ENCODE measurements at regions of chr17 and their contacts with region 1.

Region 1: GRCh38 chr17:78708510-78708973 is 73.5 kb downstream of the CYTH1 start:
- DNase-seq: peak; percentile 77
- H3K4me3 Mint-ChIP-seq: peak overlapping the region; percentile 22
- H3K27ac Mint-ChIP-seq: peak overlapping the region; percentile 42
- H3K4me1 Mint-ChIP-seq: peaks cover 64% of the 10 kb centered on the region
- H3K27me3 Mint-ChIP-seq: no peaks in the 10 kb centered on the region

Region 2: DNA sequence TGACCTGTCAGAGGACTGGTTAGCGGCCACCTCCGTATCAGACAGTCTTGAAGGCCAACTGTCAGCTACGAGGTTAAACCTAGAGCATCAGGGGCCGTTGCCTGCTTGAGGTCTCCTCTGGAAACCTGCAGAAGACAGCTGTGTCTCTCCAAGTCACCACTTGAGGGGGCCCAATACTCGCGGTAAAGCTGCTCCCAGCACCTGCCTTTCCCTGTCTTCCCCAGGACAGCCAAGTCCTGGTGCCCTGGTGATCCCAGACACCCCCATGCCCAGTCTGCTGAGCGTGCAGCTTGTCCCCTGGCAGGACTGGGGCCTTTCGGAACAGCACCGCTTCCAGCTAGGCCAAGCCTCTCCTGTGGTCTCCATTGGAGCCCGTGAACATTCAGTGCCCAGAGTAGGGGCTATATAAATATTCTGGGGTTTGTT is 211.4 kb before region 1 on chr17:
- CTCF ChIA-PET with region 1: interaction called, 10 read pairs
- intact Hi-C with region 1: loop called (anchors 1 kb)
- DNase-seq: peak; percentile 76
- H3K4me3 Mint-ChIP-seq: no peak overlapping the region
- H3K27ac Mint-ChIP-seq: no peak overlapping the region
- H3K4me1 Mint-ChIP-seq: no peaks in the 10 kb centered on the region
- H3K27me3 Mint-ChIP-seq: no peaks in the 10 kb centered on the region

Region 3: DNA sequence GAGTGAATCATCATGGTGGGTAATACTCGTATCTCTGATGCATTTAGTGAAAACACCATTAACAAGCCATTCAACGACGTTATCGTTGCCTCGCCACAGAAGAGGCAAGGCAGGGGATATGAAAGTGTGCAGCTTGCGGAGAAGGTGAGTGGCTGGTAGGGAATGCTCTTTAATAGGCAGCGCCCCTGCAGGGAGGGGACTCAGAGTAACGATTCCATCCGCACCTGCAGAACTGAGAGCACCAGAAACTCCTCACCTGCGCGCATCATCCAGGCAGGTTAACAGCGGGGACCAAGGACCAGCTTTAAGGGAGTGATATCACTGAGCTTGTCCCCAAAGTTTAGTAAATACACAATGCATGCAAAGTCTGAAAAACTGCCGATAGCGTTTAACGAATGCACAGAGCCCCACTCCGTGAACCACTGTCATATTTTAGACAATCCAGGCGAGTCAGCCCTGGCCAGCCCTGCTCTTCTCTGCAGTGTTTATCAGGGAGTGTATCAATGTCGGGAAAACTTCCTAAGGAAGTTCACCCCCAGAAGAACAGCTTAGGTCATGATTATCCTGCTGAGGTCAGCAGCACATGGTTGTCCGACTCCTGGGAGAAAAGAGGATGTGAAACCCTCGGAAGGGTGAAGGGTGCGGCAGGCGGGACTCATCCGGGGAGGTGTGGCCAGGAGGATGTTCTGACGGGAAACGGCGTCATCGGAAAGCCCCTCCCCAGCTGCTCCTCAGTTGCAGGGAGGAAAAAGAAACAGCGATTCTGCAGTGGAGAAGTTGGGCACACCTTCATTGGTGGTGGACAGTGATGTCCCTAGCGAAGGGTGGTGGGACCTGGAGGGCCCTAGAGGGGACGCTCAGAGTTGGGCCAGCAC is 62.9 kb before region 1 on chr17:
- CTCF ChIA-PET with region 1: no interaction called
- intact Hi-C with region 1: no loop called
- DNase-seq: peak; percentile 90
- H3K4me3 Mint-ChIP-seq: peak overlapping the region; percentile 64
- H3K27ac Mint-ChIP-seq: peak overlapping the region; percentile 82
- H3K4me1 Mint-ChIP-seq: peaks cover 12% of the 10 kb centered on the region
- H3K27me3 Mint-ChIP-seq: no peaks in the 10 kb centered on the region

Region 4: DNA sequence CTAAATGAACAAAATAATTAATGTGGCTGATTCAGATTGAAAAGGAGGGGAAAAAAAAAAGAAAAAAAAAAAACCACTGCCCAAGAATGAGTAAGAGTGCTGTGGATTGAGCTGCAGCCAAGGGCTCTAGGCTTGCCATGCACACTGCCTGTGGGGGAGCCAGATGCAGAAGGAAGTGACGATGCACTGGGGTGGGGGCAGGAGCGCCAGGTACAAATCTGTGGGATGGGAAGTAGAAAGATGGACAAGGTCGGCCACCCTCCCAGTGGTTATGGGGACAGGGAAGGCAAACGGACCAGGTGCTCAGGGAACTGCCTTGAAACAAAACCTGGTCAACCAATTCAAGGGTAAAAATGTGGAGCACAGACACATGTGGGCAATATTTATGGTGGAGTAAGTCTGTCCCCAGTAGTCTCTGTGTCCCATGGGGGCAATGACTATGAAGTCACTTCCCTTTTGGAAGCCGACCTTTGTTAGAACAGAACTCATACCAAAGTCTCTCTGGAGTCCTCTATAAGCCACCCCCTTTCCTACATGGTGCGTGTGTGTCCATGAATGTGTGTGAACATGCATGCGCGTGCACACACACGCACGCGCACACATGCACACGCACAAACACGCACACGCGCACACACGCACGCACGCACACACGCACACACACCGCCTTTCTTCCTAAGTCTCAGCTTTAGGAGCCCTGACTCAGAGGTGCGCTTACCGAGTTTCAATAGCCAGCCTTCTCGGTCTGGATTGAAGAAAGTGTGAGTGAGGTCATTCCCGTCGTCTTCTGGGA is 10.8 kb before region 1 on chr17:
- CTCF ChIA-PET with region 1: interaction called, 14 read pairs
- intact Hi-C with region 1: no loop called
- DNase-seq: no peak
- H3K4me3 Mint-ChIP-seq: no peak overlapping the region
- H3K27ac Mint-ChIP-seq: peak overlapping the region; percentile 52
- H3K4me1 Mint-ChIP-seq: peaks cover 5% of the 10 kb centered on the region
- H3K27me3 Mint-ChIP-seq: no peaks in the 10 kb centered on the region

Region 5: DNA sequence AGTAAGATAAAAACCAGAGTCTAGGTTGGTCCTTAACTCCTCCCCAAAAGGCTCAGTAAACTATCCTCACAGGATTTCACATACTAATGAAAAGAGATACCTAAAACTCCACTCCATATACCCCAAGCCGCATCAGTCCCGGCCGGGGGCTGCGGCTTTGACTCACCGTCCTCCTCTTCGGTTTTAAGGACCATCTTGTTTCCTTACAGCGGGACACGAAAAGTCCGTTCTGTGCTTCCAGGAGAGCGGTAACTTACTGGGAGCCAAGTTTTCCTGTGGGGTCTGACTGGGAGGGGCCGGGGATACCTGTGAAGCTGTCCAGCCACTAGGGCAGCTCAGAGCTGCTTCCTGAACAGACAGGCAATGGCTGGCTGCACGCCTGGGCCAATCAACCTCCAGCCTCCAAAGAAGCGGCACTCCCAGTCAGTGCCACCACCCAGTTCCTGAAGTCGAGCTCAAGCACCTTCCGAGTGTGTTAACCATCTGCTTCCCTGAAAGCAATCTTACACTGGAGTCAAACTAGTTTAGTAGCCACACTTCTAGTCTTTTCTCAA is 28.1 kb after region 1 on chr17:
- CTCF ChIA-PET with region 1: interaction called, 11 read pairs
- intact Hi-C with region 1: no loop called
- DNase-seq: peak; percentile 84
- H3K4me3 Mint-ChIP-seq: peak overlapping the region; percentile 88
- H3K27ac Mint-ChIP-seq: peak overlapping the region; percentile 93
- H3K4me1 Mint-ChIP-seq: peaks cover 86% of the 10 kb centered on the region
- H3K27me3 Mint-ChIP-seq: no peaks in the 10 kb centered on the region